ENCODE measurements at regions of chr10 and their contacts with region 1.

Region 1: GRCh38 chr10:22615819-22616499 is 98.4 kb downstream of the PIP4K2A start:
- DNase-seq: no peak
- H3K4me3 ChIP-seq: no peak overlapping the region
- H3K4me3 Mint-ChIP-seq: no peak overlapping the region
- H3K27ac Mint-ChIP-seq: peak overlapping the region; percentile 15
- H3K4me1 ChIP-seq: peaks cover 56% of the 10 kb centered on the region
- H3K4me1 Mint-ChIP-seq: peaks cover 49% of the 10 kb centered on the region
- H3K27me3 ChIP-seq: no peaks in the 10 kb centered on the region
- H3K27me3 Mint-ChIP-seq: no peaks in the 10 kb centered on the region
- CTCF ChIP-seq: no peak

Region 2: DNA sequence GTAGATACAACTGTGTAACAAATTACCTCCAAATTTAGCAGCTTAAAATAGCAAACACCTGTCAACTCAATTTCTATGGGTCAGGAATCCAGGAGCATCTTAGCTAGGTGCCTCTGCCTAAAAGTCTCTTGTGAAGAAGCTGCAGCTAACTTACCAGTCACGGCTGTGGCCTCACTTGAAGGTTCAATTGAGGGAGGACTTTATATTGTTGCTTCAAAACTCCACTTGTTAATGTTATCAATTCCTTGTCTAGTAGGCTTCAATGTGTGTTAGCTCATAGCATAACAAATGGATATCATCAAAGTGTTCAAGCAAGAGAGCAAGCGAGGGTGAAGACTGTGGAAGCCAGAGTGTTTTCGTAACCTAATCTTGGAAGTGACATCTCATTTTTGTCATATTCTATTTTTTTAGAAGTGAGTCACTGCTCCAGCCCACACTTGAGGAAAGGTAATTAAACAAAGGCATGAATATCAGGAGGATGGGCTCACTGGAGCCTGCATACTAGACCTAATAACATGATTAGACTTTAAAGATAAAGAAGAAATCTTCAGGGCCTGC is 97.7 kb before region 1 on chr10:
- CTCF ChIA-PET with region 1: no interaction called
- POLR2A ChIA-PET with region 1: no interaction called
- intact Hi-C with region 1: no loop called
- DNase-seq: no peak
- H3K4me3 ChIP-seq: no peak overlapping the region
- H3K4me3 Mint-ChIP-seq: no peak overlapping the region
- H3K27ac Mint-ChIP-seq: no peak overlapping the region
- H3K4me1 ChIP-seq: peaks cover 10% of the 10 kb centered on the region
- H3K4me1 Mint-ChIP-seq: no peaks in the 10 kb centered on the region
- H3K27me3 ChIP-seq: no peaks in the 10 kb centered on the region; the same call in 1 of the 2 replicates
- H3K27me3 Mint-ChIP-seq: peaks cover 9% of the 10 kb centered on the region
- CTCF ChIP-seq: no peak

Region 3: DNA sequence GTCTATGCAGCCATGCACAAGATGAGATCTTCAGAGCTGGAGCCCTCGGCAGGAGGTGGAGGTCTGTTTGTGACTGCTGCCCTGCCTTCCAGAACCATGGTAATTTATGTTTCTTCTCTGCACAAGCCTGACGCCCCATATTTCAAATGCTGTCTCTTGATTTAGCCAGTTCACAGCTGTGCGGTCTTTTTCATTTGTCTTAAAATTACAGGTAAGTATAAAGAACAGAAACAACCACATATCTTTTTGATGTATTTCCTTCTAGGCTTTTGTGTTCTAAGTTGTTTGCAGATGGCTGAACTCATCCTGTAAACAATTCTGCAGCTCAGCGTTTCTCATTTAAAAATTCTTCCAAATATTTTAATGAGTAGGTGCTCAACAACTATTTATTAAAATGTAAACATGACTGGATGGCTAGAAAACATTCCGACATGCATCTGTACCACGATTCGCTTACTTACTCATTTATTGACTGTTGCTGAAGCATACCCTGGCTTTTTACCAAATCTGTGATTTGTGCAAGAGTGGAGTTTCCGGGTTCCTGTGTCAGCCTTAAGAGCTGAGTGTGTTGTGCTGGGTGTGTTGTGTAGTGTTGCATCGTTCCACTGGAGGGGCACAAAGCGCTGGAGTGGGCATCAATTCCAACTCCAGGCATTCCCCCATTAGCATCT is 39.5 kb after region 1 on chr10:
- CTCF ChIA-PET with region 1: no interaction called
- POLR2A ChIA-PET with region 1: no interaction called
- intact Hi-C with region 1: loop called (anchors 5 kb)
- DNase-seq: no peak
- H3K4me3 ChIP-seq: no peak overlapping the region
- H3K4me3 Mint-ChIP-seq: no peak overlapping the region
- H3K27ac Mint-ChIP-seq: no peak overlapping the region
- H3K4me1 ChIP-seq: peaks cover 31% of the 10 kb centered on the region
- H3K4me1 Mint-ChIP-seq: peaks cover 10% of the 10 kb centered on the region
- H3K27me3 ChIP-seq: no peaks in the 10 kb centered on the region
- H3K27me3 Mint-ChIP-seq: no peaks in the 10 kb centered on the region
- CTCF ChIP-seq: no peak

Region 4: GRCh38 chr10:22714479-22715289 is 98.7 kb after region 1 on chr10 and contains the start of gene PIP4K2A:
- CTCF ChIA-PET with region 1: no interaction called
- POLR2A ChIA-PET with region 1: no interaction called
- intact Hi-C with region 1: loop called (anchors 5 kb)
- DNase-seq: peak; percentile 63 to 85
- H3K4me3 ChIP-seq: peak within 1 kb of the TSS; percentile 81
- H3K4me3 Mint-ChIP-seq: peak within 1 kb of the TSS; percentile 75
- H3K27ac Mint-ChIP-seq: no peak within 1 kb of the TSS
- H3K4me1 ChIP-seq: peaks cover 6% of the 10 kb centered on the region
- H3K4me1 Mint-ChIP-seq: no peaks in the 10 kb centered on the region
- H3K27me3 ChIP-seq: no peaks in the 10 kb centered on the region
- H3K27me3 Mint-ChIP-seq: no peaks in the 10 kb centered on the region
- CTCF ChIP-seq: no peak
- total RNA-seq, gene PIP4K2A: 25.2 and 26.9 TPM in 2 replicates

Measured in Caco-2 (cell line).